ENCODE measurements at regions of chr1 and their contacts with region 1.

Region 1: GRCh38 chr1:50610563-50610962 is 187.3 kb upstream of the DMRTA2 start:
- DNase-seq: peak; percentile 36
- ATAC-seq: peak; percentile 89
- H3K4me3 ChIP-seq: no peak overlapping the region
- H3K27ac ChIP-seq: peak overlapping the region; percentile 37; the same call in 1 of the 2 replicates
- H3K4me1 ChIP-seq: peaks cover 5% of the 10 kb centered on the region
- H3K27me3 ChIP-seq: no peaks in the 10 kb centered on the region
- CTCF ChIP-seq: no peak
- EP300 ChIP-seq: no peak; a peak in 1 of 4 replicates
- POLR2A ChIP-seq: no peak
- RAD21 ChIP-seq: no peak

Region 2: DNA sequence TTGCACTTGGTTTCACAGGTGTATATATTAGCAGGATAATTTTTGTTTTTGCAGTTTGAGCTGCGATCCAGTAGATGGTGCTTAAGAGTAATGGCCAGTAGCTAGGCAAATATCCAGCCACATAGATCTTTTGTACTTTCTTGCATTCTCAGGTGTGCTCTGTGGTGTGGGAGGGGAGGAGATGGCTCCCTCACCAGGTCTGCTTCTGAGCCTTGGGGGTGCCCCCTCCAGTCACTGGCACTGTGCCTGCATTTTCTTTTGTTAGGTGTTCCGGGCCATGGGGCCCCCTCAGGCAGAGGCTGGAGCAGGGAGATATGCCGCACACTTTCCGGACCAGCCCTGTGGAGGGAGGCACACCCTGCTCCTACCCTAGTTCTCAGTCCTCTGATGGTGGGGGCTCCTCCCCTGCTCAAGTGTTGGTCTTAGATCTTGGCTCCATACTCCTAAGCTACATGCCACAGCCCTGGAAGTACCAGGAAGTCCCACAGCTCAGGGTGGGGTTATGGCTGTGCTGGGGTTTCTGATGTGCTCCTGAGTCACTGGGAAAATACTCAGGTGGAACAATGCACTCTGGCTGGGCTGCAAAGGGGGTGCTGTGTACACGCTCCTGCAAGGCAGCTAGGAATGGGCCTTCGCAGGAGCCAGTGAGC is 10.2 kb after region 1 on chr1:
- CTCF ChIA-PET with region 1: interaction called, 6 read pairs
- POLR2A ChIA-PET with region 1: interaction called, 3 read pairs
- RAD21 ChIA-PET with region 1: interaction called, 7 read pairs
- SMC1A ChIA-PET with region 1: interaction called, 19 read pairs
- in situ Hi-C with region 1: no loop called
- intact Hi-C with region 1: no loop called
- DNase-seq: no peak
- ATAC-seq: peak; percentile 46; the same call in 2 of the 3 replicates
- H3K4me3 ChIP-seq: no peak overlapping the region
- H3K27ac ChIP-seq: no peak overlapping the region
- H3K4me1 ChIP-seq: no peaks in the 10 kb centered on the region
- H3K27me3 ChIP-seq: no peaks in the 10 kb centered on the region
- CTCF ChIP-seq: peak; percentile 16 to 22 (median 19); a peak in 2 of 6 replicates
- EP300 ChIP-seq: no peak
- POLR2A ChIP-seq: no peak
- RAD21 ChIP-seq: 0 out of 2 replicates have a peak, but pooled peaks have one; percentile 2

Measured in GM12878 (cell line).